BJ (cell line): ENCODE measurements at regions of chr13 and their contacts with region 1.

Region 1: GRCh38 chr13:95378603-95379002 is 77.4 kb upstream of the ABCC4 start:
- DNase-seq: no peak
- H3K4me3 ChIP-seq: no peak overlapping the region
- H3K27me3 ChIP-seq: no peaks in the 10 kb centered on the region; the same call in 1 of the 2 replicates
- CTCF ChIP-seq: no peak

Region 2: DNA sequence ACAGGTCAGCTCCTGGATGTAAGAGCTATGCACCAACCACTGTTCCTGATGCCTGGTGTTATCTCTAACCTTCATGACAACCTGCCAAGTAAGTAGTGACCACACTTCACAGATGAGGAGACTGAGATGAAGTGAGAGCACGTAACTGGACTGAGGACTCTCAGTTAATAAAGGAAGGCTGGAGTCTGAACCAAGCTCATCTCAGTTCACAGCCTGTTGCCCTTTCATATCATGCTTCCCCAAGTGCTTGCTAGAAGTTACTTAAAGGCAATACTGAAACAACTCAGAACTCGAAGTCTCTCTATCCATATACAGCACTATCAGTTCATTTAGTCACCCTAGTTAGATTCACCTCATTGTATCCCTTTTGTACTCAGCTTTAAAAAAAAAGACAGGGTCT is 197.0 kb before region 1 on chr13:
- CTCF ChIA-PET with region 1: interaction called, 13 read pairs
- POLR2A ChIA-PET with region 1: no interaction called
- DNase-seq: no peak
- H3K4me3 ChIP-seq: no peak overlapping the region
- H3K27me3 ChIP-seq: no peaks in the 10 kb centered on the region
- CTCF ChIP-seq: no peak

Region 3: DNA sequence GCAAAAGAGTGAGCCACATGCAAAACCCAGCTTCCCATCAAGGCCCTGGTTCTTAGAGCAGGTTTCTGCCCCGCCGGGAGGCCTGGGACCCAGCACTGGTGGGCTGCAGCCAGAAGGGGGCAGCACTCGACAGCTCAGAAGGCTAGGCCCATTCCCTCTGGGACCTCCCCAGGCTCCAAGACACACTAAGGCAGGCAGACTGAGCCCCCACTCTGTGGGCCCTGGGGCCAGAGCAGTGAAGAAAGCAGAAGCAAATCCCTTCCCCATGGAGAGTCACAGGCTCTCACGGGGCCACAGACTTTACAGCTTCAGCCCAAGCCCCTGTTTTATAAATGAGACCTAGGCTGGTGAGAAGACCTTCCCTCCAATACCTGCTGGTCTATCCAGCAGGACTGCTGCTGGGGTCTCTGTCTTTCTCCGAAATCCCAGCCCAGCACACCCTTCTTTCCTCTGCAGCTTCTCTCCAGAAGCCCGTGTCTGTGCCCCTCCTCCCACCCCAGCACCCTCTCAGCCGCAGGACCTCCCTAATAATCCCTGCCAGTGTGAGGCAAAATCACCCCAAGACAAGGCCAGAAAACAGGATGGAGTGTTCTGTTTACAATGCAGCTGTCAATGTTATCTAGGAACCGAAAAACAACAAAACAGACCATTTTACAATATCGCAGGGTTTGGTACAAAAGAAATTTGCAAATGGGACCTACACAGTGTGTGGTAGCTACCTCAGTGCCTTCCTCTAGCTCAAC is 186.6 kb before region 1 on chr13:
- CTCF ChIA-PET with region 1: interaction called, 325 read pairs
- POLR2A ChIA-PET with region 1: interaction called, 4 read pairs
- DNase-seq: no peak
- H3K4me3 ChIP-seq: no peak overlapping the region
- H3K27me3 ChIP-seq: no peaks in the 10 kb centered on the region
- CTCF ChIP-seq: peak; percentile 98

Region 4: DNA sequence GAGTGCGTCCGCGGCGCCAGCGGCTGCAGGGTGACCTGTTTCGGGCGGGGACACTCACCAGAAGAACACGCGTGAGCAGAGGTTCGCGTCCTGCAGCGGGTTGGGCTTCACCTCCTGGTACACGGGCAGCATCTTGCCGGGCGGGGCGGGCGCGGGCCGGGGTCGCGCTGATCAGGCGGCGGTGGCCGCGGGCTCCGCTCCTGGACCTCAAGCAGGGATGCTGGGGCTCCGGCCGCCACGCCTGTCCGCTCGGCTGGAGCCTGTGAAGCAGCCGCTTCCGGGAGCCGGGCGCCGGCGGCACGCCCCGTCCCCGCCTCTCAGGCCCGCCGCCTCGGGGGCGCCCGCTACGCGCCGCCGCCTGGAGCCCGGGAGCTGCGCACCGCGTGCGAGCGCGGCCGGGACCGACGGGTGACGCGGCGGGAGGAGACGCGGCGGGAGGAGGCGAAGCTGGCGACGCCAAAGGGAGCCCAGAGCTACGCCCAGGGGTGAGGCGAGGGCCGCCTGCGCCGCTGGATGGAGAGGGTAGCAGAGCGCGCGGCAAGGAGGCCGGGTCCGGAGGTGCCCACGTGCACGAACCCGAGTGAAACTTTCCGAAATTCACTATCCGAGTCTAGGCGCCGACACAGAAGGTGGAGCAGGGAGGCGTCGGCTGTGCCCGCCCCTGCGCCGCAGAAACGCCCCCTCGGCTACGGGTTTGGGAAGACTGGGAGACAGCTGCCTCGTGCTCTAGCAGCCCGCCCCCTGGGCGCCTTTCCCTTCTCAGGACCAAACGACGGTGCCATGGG is 77.2 kb before region 1 on chr13 and contains the start of gene ABCC4:
- CTCF ChIA-PET with region 1: interaction called, 14 read pairs
- POLR2A ChIA-PET with region 1: no interaction called
- DNase-seq: no peak
- H3K4me3 ChIP-seq: peak within 1 kb of the TSS; percentile 64
- H3K27me3 ChIP-seq: no peaks in the 10 kb centered on the region
- CTCF ChIP-seq: peak; percentile 9; the same call in 1 of the 2 replicates
- polyA plus RNA-seq, gene ABCC4: 11.2 and 17.4 TPM in 2 replicates

Region 5: GRCh38 chr13:95367309-95367843 is 11.2 kb before region 1 on chr13:
- CTCF ChIA-PET with region 1: interaction called, 10 read pairs
- POLR2A ChIA-PET with region 1: no interaction called
- DNase-seq: no peak
- H3K4me3 ChIP-seq: no peak overlapping the region
- H3K27me3 ChIP-seq: no peaks in the 10 kb centered on the region
- CTCF ChIP-seq: no peak

Region 6: GRCh38 chr13:95403828-95404522 is 25.4 kb after region 1 on chr13:
- CTCF ChIA-PET with region 1: interaction called, 53 read pairs
- POLR2A ChIA-PET with region 1: no interaction called
- DNase-seq: peak; percentile 7
- H3K4me3 ChIP-seq: peak overlapping the region; percentile 32
- H3K27me3 ChIP-seq: no peaks in the 10 kb centered on the region
- CTCF ChIP-seq: peak; percentile 89

Region 7: GRCh38 chr13:95494082-95494681 is 115.6 kb after region 1 on chr13:
- CTCF ChIA-PET with region 1: no interaction called
- POLR2A ChIA-PET with region 1: no interaction called
- DNase-seq: peak; percentile 9
- H3K4me3 ChIP-seq: no peak overlapping the region
- H3K27me3 ChIP-seq: no peaks in the 10 kb centered on the region
- CTCF ChIP-seq: peak; percentile 69

Region 8: GRCh38 chr13:95858286-95859075 is 479.9 kb after region 1 on chr13:
- CTCF ChIA-PET with region 1: no interaction called
- POLR2A ChIA-PET with region 1: no interaction called
- DNase-seq: no peak
- H3K4me3 ChIP-seq: no peak overlapping the region
- H3K27me3 ChIP-seq: no peaks in the 10 kb centered on the region
- CTCF ChIP-seq: no peak